Naive thymus-derived CD4-positive, alpha-beta T cell (primary cell): ENCODE measurements at regions of chr19 and their contacts with region 1.

Region 1: GRCh38 chr19:9796113-9796773 is 22.6 kb downstream of the FBXL12 start:
- DNase-seq: peak; percentile 55 to 92 (median 87)
- ATAC-seq: peak; percentile 48
- H3K4me3 ChIP-seq: no peak overlapping the region
- H3K4me3 Mint-ChIP-seq: peak overlapping the region in 3 of 10 donors; percentile 16 to 43 (median 16)
- H3K27ac ChIP-seq: peak overlapping the region; percentile 63
- H3K27ac Mint-ChIP-seq: peak overlapping the region; percentile 66 to 97 (median 90)
- H3K4me1 ChIP-seq: peaks cover 0 to 7% of the 10 kb centered on the region in 2 donors
- H3K4me1 Mint-ChIP-seq: peaks cover 15 to 43% (median 34%) of the 10 kb centered on the region in 7 donors
- H3K27me3 ChIP-seq: no peaks in the 10 kb centered on the region
- H3K27me3 Mint-ChIP-seq: peaks cover 0 to 3% (median 0%) of the 10 kb centered on the region in 5 donors

Region 2: GRCh38 chr19:9205501-9206113 is 590.6 kb before region 1 on chr19:
- CTCF ChIA-PET with region 1: interaction called, 10 read pairs
- POLR2A ChIA-PET with region 1: no interaction called
- intact Hi-C with region 1: loop called in 1 of 2 experiments (anchors 1 kb)
- DNase-seq: peak; percentile 36 to 63 (median 53)
- ATAC-seq: peak; percentile 69
- H3K4me3 ChIP-seq: no peak overlapping the region
- H3K4me3 Mint-ChIP-seq: peak overlapping the region in 9 of 10 donors; percentile 37 to 69 (median 56)
- H3K27ac ChIP-seq: no peak overlapping the region
- H3K27ac Mint-ChIP-seq: no peak overlapping the region
- H3K4me1 ChIP-seq: no peaks in the 10 kb centered on the region
- H3K4me1 Mint-ChIP-seq: peaks cover 0 to 8% (median 0%) of the 10 kb centered on the region in 7 donors
- H3K27me3 ChIP-seq: no peaks in the 10 kb centered on the region
- H3K27me3 Mint-ChIP-seq: peaks cover 0 to 22% (median 6%) of the 10 kb centered on the region in 5 donors

Region 3: GRCh38 chr19:9323919-9324583 is 472.2 kb before region 1 on chr19 and contains the start of gene ZNF559:
- CTCF ChIA-PET with region 1: no interaction called
- POLR2A ChIA-PET with region 1: no interaction called
- intact Hi-C with region 1: loop called in 1 of 2 experiments (anchors 1 kb)
- DNase-seq: peak; percentile 93 to 99 (median 97)
- ATAC-seq: peak; percentile 97
- H3K4me3 ChIP-seq: peak within 1 kb of the TSS; percentile 74
- H3K4me3 Mint-ChIP-seq: peak within 1 kb of the TSS; percentile 92 to 99 (median 95)
- H3K27ac ChIP-seq: peak within 1 kb of the TSS; percentile 85
- H3K27ac Mint-ChIP-seq: peak within 1 kb of the TSS; percentile 91 to 97 (median 93)
- H3K4me1 ChIP-seq: peaks cover 0 to 10% of the 10 kb centered on the region in 2 donors
- H3K4me1 Mint-ChIP-seq: peaks cover 6 to 46% (median 29%) of the 10 kb centered on the region in 7 donors
- H3K27me3 ChIP-seq: no peaks in the 10 kb centered on the region
- H3K27me3 Mint-ChIP-seq: peaks cover 0 to 2% (median 0%) of the 10 kb centered on the region in 5 donors
- total RNA-seq, gene ZNF559: 9.1 to 58.2 (median 16.5) TPM

Region 4: DNA sequence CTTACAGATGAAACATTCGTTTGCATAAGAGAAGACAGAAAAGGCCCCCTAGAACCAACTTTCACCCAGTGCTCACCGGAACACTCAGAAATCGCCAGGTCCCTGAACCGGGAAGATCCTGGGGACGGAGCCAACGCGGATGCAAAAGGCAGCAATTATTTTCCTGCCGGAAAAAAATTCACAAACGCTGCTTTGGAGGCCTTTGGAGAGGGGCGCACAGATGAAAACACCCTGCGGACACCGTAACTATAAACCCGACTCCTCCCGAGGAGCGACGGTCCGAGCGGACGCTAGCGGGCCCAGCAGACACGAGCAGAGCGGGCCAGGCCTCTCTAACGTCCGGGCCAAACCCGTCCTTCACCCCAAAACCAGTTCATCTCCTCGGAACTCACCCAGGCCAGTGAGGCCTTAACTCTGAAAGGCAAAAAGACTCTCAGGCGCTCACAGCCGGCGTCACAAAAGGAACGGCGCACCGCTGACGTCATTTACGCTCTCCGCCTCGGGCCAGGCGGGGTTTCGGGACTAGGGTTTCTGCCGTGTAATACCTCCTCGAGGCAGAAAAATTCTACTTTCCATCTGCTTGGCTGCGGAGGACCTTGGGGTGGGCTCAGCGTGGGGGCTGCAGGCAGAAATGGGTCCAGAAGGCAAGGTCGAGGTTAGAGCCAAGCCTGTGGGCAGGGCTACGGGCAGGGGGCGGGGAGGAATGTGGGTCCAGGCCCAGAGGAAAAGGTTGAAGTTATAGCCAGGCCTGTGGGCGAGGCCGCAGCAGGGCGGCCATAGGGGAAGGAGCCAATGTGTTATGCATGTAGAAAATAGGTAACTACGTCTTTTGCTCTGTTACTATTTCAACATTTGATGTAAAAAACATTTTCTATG is 257.8 kb before region 1 on chr19 and contains the start of gene ZNF426:
- CTCF ChIA-PET with region 1: no interaction called
- POLR2A ChIA-PET with region 1: no interaction called
- intact Hi-C with region 1: loop called (anchors 1 to 2 kb)
- DNase-seq: peak; percentile 76 to 90 (median 85)
- ATAC-seq: peak; percentile 96
- H3K4me3 ChIP-seq: peak within 1 kb of the TSS; percentile 93
- H3K4me3 Mint-ChIP-seq: peak within 1 kb of the TSS; percentile 89 to 99 (median 98)
- H3K27ac ChIP-seq: peak within 1 kb of the TSS; percentile 90
- H3K27ac Mint-ChIP-seq: peak within 1 kb of the TSS; percentile 95 to 100 (median 97)
- H3K4me1 ChIP-seq: peaks cover 0 to 7% of the 10 kb centered on the region in 2 donors
- H3K4me1 Mint-ChIP-seq: peaks cover 14 to 46% (median 33%) of the 10 kb centered on the region in 7 donors
- H3K27me3 ChIP-seq: no peaks in the 10 kb centered on the region
- H3K27me3 Mint-ChIP-seq: no peaks in the 10 kb centered on the region
- total RNA-seq, gene ZNF426: 11.2 to 22.6 (median 15.8) TPM

Region 5: GRCh38 chr19:9621156-9622037 is 174.8 kb before region 1 on chr19 and contains the start of gene ZNF561:
- CTCF ChIA-PET with region 1: interaction called, 8 read pairs
- POLR2A ChIA-PET with region 1: interaction called, 6 read pairs
- intact Hi-C with region 1: loop called (anchors 1 kb)
- DNase-seq: peak; percentile 73 to 93 (median 89)
- ATAC-seq: peak; percentile 94
- H3K4me3 ChIP-seq: peak within 1 kb of the TSS; percentile 96
- H3K4me3 Mint-ChIP-seq: peak within 1 kb of the TSS; percentile 96 to 100 (median 99)
- H3K27ac ChIP-seq: peak within 1 kb of the TSS; percentile 89
- H3K27ac Mint-ChIP-seq: peak within 1 kb of the TSS; percentile 99 to 100 (median 100)
- H3K4me1 ChIP-seq: peaks cover 12 to 13% of the 10 kb centered on the region in 2 donors
- H3K4me1 Mint-ChIP-seq: peaks cover 13 to 34% (median 25%) of the 10 kb centered on the region in 7 donors
- H3K27me3 ChIP-seq: no peaks in the 10 kb centered on the region
- H3K27me3 Mint-ChIP-seq: peaks cover 0 to 4% (median 0%) of the 10 kb centered on the region in 5 donors
- total RNA-seq, gene ZNF561: 35.9 to 72.5 (median 42.3) TPM

Region 6: DNA sequence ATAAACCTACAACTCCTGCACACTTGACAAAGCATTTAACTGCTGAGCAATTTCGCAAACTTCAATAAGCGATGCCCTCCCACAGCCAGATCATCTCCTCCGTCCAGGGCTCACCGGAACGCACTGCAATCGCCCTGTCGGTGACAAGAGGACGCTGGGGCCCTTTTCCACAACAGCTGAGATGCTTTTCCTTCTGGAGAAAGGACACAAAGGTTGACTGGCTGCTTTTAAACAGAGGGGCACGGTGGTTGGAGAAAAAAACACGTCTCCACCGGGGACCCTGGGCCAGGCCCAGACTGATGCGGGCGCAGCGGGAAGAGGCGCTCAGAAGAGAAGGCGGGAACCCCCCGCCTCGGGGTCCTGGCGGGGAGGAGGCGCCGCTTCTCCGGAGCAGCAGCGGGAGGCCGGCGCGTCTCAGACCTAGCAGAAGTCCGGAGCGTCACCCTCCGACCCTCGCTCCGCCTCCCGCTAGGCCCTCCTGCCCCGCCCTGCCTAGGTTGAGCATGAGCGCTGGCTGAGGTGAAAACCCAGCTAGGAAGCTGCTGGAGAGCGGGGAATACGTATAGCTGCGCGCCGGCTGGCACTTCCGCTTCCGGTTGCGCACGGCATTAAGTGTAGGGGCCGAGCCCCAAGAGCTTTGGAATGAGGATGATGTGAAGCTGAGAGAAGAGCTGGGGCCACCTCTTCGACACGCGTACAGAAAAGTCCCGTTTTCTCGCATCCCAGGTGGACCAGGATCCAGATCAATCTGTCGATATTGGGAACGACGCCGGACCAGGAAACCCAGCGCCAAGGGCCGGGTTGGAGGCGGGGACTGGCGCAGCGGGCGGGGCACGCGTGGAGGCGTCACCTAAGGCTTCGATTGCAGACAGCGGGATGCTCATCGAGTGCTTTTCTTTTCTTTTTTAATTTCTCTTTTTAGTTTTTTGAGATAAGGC is 27.8 kb before region 1 on chr19 and contains the start of gene ZNF846:
- CTCF ChIA-PET with region 1: interaction called, 4 read pairs
- POLR2A ChIA-PET with region 1: interaction called, 19 read pairs
- intact Hi-C with region 1: loop called (anchors 1 kb)
- DNase-seq: peak; percentile 83 to 94 (median 91)
- ATAC-seq: peak; percentile 98
- H3K4me3 ChIP-seq: peak within 1 kb of the TSS; percentile 95
- H3K4me3 Mint-ChIP-seq: peak within 1 kb of the TSS; percentile 81 to 99 (median 95)
- H3K27ac ChIP-seq: peak within 1 kb of the TSS; percentile 93
- H3K27ac Mint-ChIP-seq: peak within 1 kb of the TSS; percentile 92 to 100 (median 97)
- H3K4me1 ChIP-seq: peaks cover 8 to 10% of the 10 kb centered on the region in 2 donors
- H3K4me1 Mint-ChIP-seq: peaks cover 0 to 21% (median 9%) of the 10 kb centered on the region in 7 donors
- H3K27me3 ChIP-seq: no peaks in the 10 kb centered on the region
- H3K27me3 Mint-ChIP-seq: no peaks in the 10 kb centered on the region
- total RNA-seq, gene ZNF846: 5.1 to 24.8 (median 13.0) TPM

Region 7: GRCh38 chr19:9834726-9835506 is 38.7 kb after region 1 on chr19 and contains the start of gene PIN1:
- CTCF ChIA-PET with region 1: interaction called, 3 read pairs
- POLR2A ChIA-PET with region 1: no interaction called
- intact Hi-C with region 1: loop called (anchors 1 kb)
- DNase-seq: peak; percentile 98 to 100 (median 99)
- ATAC-seq: peak; percentile 98
- H3K4me3 ChIP-seq: peak within 1 kb of the TSS; percentile 92
- H3K4me3 Mint-ChIP-seq: peak within 1 kb of the TSS; percentile 83 to 97 (median 95)
- H3K27ac ChIP-seq: peak within 1 kb of the TSS; percentile 71
- H3K27ac Mint-ChIP-seq: peak within 1 kb of the TSS; percentile 82 to 99 (median 94)
- H3K4me1 ChIP-seq: peaks cover 10 to 11% of the 10 kb centered on the region in 2 donors
- H3K4me1 Mint-ChIP-seq: peaks cover 16 to 32% (median 20%) of the 10 kb centered on the region in 7 donors
- H3K27me3 ChIP-seq: no peaks in the 10 kb centered on the region
- H3K27me3 Mint-ChIP-seq: no peaks in the 10 kb centered on the region
- total RNA-seq, gene PIN1: 41.4 to 93.2 (median 61.1) TPM

Region 8: GRCh38 chr19:9847087-9847671 is 50.9 kb after region 1 on chr19:
- CTCF ChIA-PET with region 1: no interaction called
- POLR2A ChIA-PET with region 1: no interaction called
- intact Hi-C with region 1: no loop called
- DNase-seq: no peak
- ATAC-seq: peak; percentile 47
- H3K4me3 ChIP-seq: no peak overlapping the region
- H3K4me3 Mint-ChIP-seq: peak overlapping the region in 1 of 10 donors; percentile 56
- H3K27ac ChIP-seq: no peak overlapping the region
- H3K27ac Mint-ChIP-seq: peak overlapping the region in 3 of 9 donors; percentile 65 to 73 (median 70)
- H3K4me1 ChIP-seq: no peaks in the 10 kb centered on the region
- H3K4me1 Mint-ChIP-seq: peaks cover 3 to 49% (median 25%) of the 10 kb centered on the region in 7 donors
- H3K27me3 ChIP-seq: no peaks in the 10 kb centered on the region
- H3K27me3 Mint-ChIP-seq: no peaks in the 10 kb centered on the region